Breast epithelium (tissue), 4 donors: ENCODE measurements at regions of chr17 and their contacts with region 1.

Region 1: DNA sequence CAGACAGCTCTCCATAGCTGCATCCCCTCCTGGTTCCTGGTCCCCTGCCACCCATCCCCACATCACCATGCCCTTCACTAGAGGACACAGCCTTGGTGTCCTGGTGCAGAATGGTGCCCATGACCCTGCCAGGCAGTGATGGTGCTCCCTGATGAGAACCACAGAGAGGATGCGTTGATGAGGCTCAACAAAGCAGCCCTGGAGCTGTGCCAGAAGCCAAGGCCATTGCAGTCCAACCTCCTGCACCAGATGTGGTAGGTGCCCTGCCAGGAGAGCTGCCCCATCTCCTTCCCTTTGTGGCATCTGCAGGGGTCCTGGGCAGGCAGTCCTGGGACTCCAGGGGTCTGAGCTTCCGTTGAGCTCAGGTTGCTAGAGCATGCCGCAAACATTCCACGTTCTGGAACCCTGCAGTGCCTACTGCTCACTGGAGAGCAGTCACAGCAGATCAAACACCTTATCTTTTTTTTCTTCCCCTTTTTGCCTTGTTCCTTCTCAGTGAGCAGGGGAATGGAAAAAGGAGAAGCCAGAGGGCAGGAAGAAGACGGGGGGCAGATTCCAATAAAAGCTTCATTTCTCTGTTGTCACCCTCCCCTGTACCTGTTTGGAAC is 5.3 kb upstream of the EPN3 start:
- DNase-seq: no peak
- H3K4me3 ChIP-seq: no peak overlapping the region
- H3K27ac ChIP-seq: no peak overlapping the region
- H3K4me1 ChIP-seq: peaks cover 3% of the 10 kb centered on the region in 2 donors
- H3K27me3 ChIP-seq: peaks cover 0 to 1% of the 10 kb centered on the region in 2 donors
- CTCF ChIP-seq: no peak
- POLR2A ChIP-seq: no peak

Region 2: GRCh38 chr17:49829026-49829425 is 698.2 kb before region 1 on chr17:
- intact Hi-C with region 1: loop called (anchors 5 kb)
- DNase-seq: no peak
- H3K4me3 ChIP-seq: no peak overlapping the region
- H3K27ac ChIP-seq: no peak overlapping the region
- H3K4me1 ChIP-seq: no peaks in the 10 kb centered on the region
- H3K27me3 ChIP-seq: no peaks in the 10 kb centered on the region
- CTCF ChIP-seq: no peak
- POLR2A ChIP-seq: no peak

Region 3: GRCh38 chr17:50507871-50508572 is 19.2 kb before region 1 on chr17 and contains the start of gene MYCBPAP:
- intact Hi-C with region 1: loop called (anchors 1 kb)
- DNase-seq: peak; percentile 60 to 75
- H3K4me3 ChIP-seq: peak within 1 kb of the TSS; percentile 54 to 92 (median 76)
- H3K27ac ChIP-seq: peak within 1 kb of the TSS; percentile 87 to 93
- H3K4me1 ChIP-seq: no peaks in the 10 kb centered on the region
- H3K27me3 ChIP-seq: no peaks in the 10 kb centered on the region
- CTCF ChIP-seq: no peak
- POLR2A ChIP-seq: no peak
- total RNA-seq, gene MYCBPAP: 0.66 to 1.9 (median 1.3) TPM